Activated T-helper 1 cell treated with anti-CD3 and anti-CD28 coated beads, Interleukin-12 subunit alpha, Interleukin-12 subunit beta, Interleukin-2, Interleukin-4 antibody, amounts not matched to agents 30 ng/mL and 10 ng/mL and 1 ng/mL, durations not matched to agents 14 hours and 24 hours and 36 hours (primary cell): ENCODE measurements at regions of chr10 and their contacts with region 1.

Region 1: GRCh38 chr10:119650692-119651513 is at the start of gene BAG3:
- DNase-seq: peak; percentile 70
- H3K4me3 Mint-ChIP-seq: peak within 1 kb of the TSS; percentile 95
- H3K27ac Mint-ChIP-seq: peak within 1 kb of the TSS; percentile 96
- H3K4me1 Mint-ChIP-seq: peaks cover 50% of the 10 kb centered on the region
- H3K27me3 Mint-ChIP-seq: no peaks in the 10 kb centered on the region
- total RNA-seq, gene BAG3: 30.4 and 30.5 TPM in 2 replicates

Region 2: GRCh38 chr10:119165171-119166110 is 485.5 kb before region 1 on chr10 and contains the start of gene SFXN4:
- intact Hi-C with region 1: loop called (anchors 1 kb)
- DNase-seq: peak; percentile 82
- H3K4me3 Mint-ChIP-seq: peak within 1 kb of the TSS; percentile 91
- H3K27ac Mint-ChIP-seq: peak within 1 kb of the TSS; percentile 94
- H3K4me1 Mint-ChIP-seq: peaks cover 45% of the 10 kb centered on the region
- H3K27me3 Mint-ChIP-seq: no peaks in the 10 kb centered on the region
- total RNA-seq, gene SFXN4: 58.2 and 58.7 TPM in 2 replicates

Region 3: DNA sequence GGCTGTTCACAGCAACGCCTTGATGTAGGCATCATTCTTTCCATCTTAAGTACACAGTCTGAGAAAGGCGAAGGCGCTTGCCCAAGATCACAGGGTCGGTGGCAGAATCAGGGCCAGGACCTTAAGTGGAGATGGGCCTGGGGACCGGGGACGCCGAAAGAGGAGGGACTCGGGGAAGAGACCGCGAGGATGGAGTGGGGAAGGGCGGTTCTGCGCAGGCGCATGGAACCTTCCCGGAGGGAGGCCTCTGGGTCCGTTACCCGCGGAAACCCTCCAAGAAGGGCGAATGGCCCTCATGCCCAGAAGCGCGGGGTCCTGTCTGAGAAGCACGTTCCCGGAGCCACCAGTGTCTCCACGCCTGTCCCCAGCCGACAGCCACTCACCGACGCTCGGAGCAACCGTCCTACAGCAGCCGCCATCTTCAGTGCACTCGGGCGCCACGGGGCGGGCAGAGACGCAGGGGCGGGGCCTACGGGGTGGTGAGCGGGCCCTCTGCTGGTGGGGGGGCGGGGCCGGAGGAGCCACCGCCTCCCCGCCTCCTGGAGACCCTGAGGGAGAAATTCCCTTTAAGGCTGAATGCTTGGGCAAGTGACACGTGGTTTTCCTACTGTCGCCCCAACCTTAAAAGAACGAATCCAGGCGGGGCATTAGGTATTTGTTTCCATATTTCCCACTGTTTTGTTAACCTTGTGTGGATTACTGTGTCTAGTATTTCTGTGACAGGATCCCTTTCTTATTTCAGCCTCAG is 472.4 kb before region 1 on chr10 and contains the start of gene PRDX3:
- intact Hi-C with region 1: loop called (anchors 2 kb)
- DNase-seq: peak; percentile 89
- H3K4me3 Mint-ChIP-seq: peak within 1 kb of the TSS; percentile 100
- H3K27ac Mint-ChIP-seq: peak within 1 kb of the TSS; percentile 100
- H3K4me1 Mint-ChIP-seq: peaks cover 30% of the 10 kb centered on the region
- H3K27me3 Mint-ChIP-seq: no peaks in the 10 kb centered on the region
- total RNA-seq, gene PRDX3: 158 and 163 TPM in 2 replicates

Region 4: DNA sequence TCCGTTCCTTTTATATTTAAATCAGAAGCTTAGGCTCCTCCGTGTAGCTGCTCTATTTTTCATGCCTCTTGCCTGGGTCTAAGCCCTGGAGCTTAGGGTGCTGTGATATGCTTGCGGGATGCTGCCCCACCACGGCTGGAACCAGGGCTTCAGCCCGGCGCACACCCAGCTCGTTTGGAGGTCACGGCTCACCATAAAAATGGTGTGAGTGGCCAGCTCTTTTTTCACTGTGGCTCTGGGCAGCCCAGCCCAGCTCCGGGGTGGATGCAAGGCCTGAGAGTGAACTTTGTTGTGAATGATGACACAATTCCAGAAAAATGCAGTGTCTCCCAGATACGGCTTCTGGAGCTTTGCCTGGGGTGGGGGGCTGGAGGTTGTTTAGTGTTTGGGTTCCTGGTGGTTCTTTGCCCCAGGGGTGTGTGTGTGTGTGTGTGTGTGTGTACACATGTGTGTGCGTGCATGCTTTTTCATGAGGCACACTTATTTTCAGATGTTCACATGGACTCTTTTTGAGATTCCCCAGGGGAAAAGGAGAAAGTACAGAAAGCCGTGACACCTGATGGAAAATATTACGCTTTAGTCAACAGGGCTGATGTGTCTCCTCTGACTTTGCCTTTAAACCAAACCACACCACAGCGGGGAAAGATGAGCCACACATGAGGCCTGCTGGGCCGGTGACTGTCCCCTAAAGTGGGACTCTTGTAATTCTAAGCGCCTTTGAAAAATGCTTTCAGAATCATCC is 397.3 kb before region 1 on chr10:
- intact Hi-C with region 1: no loop called
- DNase-seq: no peak
- H3K4me3 Mint-ChIP-seq: peak overlapping the region; percentile 15
- H3K27ac Mint-ChIP-seq: peak overlapping the region; percentile 88
- H3K4me1 Mint-ChIP-seq: peaks cover 63% of the 10 kb centered on the region
- H3K27me3 Mint-ChIP-seq: no peaks in the 10 kb centered on the region

Region 5: GRCh38 chr10:119496273-119496672 is 154.6 kb before region 1 on chr10:
- intact Hi-C with region 1: loop called (anchors 5 kb)
- DNase-seq: no peak
- H3K4me3 Mint-ChIP-seq: peak overlapping the region; percentile 64
- H3K27ac Mint-ChIP-seq: peak overlapping the region; percentile 87
- H3K4me1 Mint-ChIP-seq: peaks cover 79% of the 10 kb centered on the region
- H3K27me3 Mint-ChIP-seq: no peaks in the 10 kb centered on the region

Region 6: DNA sequence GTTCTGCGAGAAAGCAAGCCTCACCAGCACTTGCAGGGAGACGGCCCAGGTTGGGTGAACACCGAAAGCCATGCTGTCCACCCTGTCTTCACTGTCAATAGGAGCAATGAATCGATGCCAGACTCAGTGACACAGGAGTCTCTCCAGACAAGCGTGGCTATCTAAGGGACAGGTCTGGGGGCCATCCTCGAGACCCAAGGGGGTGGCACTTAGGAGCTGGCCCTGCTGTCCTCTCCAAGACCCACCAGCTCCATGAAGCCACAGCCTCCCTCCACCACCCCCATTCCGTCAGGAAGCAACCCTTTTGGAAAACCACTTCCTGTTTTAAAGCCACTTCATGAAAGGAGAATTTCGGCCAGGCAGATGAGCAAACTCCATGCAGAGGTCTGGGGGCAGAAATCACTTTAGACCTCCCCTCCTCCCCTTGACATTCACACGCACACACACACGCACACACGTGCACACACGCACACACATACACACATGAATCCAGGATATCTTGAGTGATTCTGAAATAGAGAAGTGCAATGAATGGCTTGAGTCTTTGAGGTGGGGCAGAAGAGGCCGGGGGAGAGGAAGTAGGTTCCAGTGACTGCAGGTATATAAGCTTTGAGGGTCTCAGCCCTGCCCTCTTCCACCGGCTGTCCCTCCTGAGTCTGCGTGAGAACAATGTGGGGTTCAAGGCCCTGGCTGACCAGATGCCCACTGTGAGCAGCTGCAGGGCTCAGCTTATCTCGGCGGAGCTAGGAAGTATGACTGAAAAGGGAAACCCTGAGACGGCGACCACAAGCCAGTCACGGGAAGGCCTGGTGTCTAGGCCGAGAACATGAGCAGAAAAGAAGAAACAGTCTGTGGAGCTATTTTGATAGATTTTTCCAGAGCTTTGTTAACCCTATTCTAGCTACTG is 133.4 kb before region 1 on chr10:
- intact Hi-C with region 1: loop called (anchors 2 kb)
- DNase-seq: peak; percentile 55
- H3K4me3 Mint-ChIP-seq: peak overlapping the region; percentile 54
- H3K27ac Mint-ChIP-seq: peak overlapping the region; percentile 82
- H3K4me1 Mint-ChIP-seq: peaks cover 53% of the 10 kb centered on the region
- H3K27me3 Mint-ChIP-seq: no peaks in the 10 kb centered on the region

Region 7: GRCh38 chr10:119705434-119705831 is 54.5 kb after region 1 on chr10:
- intact Hi-C with region 1: loop called (anchors 1 kb)
- DNase-seq: no peak
- H3K4me3 Mint-ChIP-seq: peak overlapping the region; percentile 74
- H3K27ac Mint-ChIP-seq: peak overlapping the region; percentile 99
- H3K4me1 Mint-ChIP-seq: peaks cover 82% of the 10 kb centered on the region
- H3K27me3 Mint-ChIP-seq: peaks cover 2% of the 10 kb centered on the region

Region 8: GRCh38 chr10:119725828-119726675 is 75.1 kb after region 1 on chr10 and contains the start of gene INPP5F:
- intact Hi-C with region 1: loop called (anchors 1 kb)
- DNase-seq: peak; percentile 98
- H3K4me3 Mint-ChIP-seq: peak within 1 kb of the TSS; percentile 93
- H3K27ac Mint-ChIP-seq: peak within 1 kb of the TSS; percentile 81
- H3K4me1 Mint-ChIP-seq: peaks cover 39% of the 10 kb centered on the region
- H3K27me3 Mint-ChIP-seq: no peaks in the 10 kb centered on the region
- total RNA-seq, gene INPP5F: 17.7 and 19.4 TPM in 2 replicates

Region 9: DNA sequence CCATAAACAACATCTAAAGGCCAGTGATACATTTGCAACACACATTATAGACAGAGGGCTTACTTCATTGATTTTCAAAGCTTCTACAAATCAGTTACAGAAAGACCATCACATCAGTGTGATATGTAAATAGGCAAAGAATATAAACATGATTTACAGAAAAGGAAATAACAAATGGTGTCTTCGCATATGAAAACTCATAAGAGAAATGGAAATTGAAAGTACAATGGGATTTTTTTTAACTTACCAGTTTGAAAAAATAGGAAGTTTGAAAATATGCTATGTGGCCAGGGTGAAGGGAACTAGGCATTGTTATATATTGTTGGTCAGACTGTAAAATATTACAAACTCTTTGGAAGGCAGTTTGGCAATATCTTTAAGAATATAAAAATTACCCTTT is 268.9 kb after region 1 on chr10:
- intact Hi-C with region 1: no loop called
- DNase-seq: no peak
- H3K4me3 Mint-ChIP-seq: peak overlapping the region; percentile 53
- H3K27ac Mint-ChIP-seq: peak overlapping the region; percentile 25
- H3K4me1 Mint-ChIP-seq: peaks cover 17% of the 10 kb centered on the region
- H3K27me3 Mint-ChIP-seq: no peaks in the 10 kb centered on the region